ENCODE measurements at regions of chr6 and their contacts with region 1.

Region 1: DNA sequence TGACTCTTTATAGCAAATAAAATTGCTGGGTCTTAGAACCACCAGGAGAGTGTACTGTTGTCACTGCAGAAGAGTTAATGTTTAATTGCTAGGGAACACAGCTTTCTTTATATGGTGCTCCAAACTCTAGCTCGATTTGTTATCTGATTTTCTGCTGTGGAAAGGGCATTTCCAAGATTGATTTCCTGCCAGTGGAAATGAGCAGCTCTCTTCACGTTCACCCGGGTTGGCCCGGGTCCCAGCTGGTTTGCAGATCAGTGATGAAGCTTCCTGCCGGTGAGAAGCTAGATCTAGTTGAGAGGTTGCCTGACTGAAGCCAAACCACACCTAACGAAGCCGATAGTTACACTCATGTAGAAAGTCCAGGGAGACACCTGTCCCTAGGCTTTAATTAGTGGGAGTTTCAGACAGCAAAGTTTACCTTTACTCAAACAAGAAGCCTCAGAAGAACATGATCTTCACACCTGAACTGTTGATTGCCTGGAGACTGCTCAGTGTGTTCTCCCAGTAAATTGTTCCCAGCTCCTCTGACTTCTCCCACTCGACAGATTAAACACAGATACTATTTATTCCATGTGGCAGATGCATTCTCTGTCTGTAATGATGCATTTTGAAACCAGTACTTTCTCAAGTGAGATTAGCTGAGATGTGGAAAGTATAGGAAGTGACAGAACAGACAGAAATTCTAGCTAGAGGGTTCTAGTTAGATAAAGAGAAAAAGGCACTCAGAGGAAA is 27.8 kb downstream of the PAQR8 start:
- DNase-seq: peak; percentile 55
- H3K4me3 Mint-ChIP-seq: peak overlapping the region; percentile 59
- H3K27ac Mint-ChIP-seq: peak overlapping the region; percentile 84
- H3K4me1 Mint-ChIP-seq: peaks cover 78% of the 10 kb centered on the region
- H3K27me3 Mint-ChIP-seq: no peaks in the 10 kb centered on the region

Region 2: DNA sequence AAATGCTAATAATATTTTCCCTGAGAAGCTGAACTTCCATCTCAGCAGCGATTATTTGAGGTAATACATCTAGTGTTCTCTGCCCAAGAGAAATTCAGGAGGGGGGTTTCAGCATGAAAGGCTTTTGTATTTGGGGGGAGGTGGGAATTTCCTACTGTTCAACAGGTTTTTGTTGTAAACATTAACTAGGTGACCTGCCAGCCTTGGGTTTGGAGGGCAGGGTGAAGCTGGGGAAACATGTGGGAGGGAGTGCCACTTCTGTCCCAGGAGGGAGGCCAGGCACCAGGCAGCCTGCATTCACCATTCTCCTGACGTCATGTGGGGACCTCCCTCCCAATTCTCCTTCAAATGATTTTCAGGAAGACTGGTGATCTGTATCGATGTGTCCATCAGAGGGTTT is 264.7 kb before region 1 on chr6:
- intact Hi-C with region 1: no loop called
- DNase-seq: no peak
- H3K4me3 Mint-ChIP-seq: no peak overlapping the region
- H3K27ac Mint-ChIP-seq: no peak overlapping the region
- H3K4me1 Mint-ChIP-seq: no peaks in the 10 kb centered on the region
- H3K27me3 Mint-ChIP-seq: peaks cover 14% of the 10 kb centered on the region

Region 3: GRCh38 chr6:52227495-52227894 is 162.3 kb before region 1 on chr6:
- intact Hi-C with region 1: loop called (anchors 1 kb)
- DNase-seq: peak; percentile 71
- H3K4me3 Mint-ChIP-seq: no peak overlapping the region
- H3K27ac Mint-ChIP-seq: no peak overlapping the region
- H3K4me1 Mint-ChIP-seq: peaks cover 37% of the 10 kb centered on the region
- H3K27me3 Mint-ChIP-seq: peaks cover 60% of the 10 kb centered on the region

Region 4: DNA sequence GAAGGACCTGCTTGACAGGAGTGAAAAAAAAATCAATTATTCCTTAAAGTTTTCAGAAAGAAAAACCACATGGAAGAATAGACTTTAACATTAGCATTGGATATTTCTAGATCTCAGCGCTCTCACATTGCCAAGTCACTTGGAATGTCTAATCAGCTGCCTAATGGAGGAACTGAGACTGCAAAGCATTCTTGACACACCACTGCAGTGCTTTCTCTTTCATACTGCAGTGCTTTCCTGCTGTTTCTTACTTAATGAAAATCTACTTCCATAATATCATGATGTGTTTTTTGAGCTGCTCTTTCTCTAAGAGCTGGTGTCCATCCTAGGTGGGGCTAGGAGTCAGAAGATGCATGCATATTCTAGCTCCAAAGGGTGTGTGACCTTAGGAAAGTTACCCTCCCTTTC is 84.8 kb before region 1 on chr6:
- intact Hi-C with region 1: loop called (anchors 5 kb)
- DNase-seq: no peak
- H3K4me3 Mint-ChIP-seq: no peak overlapping the region
- H3K27ac Mint-ChIP-seq: peak overlapping the region; percentile 70
- H3K4me1 Mint-ChIP-seq: peaks cover 52% of the 10 kb centered on the region
- H3K27me3 Mint-ChIP-seq: no peaks in the 10 kb centered on the region

Region 5: GRCh38 chr6:52377538-52378221 is 12.1 kb before region 1 on chr6:
- intact Hi-C with region 1: loop called (anchors 1 kb)
- DNase-seq: no peak
- H3K4me3 Mint-ChIP-seq: no peak overlapping the region
- H3K27ac Mint-ChIP-seq: no peak overlapping the region
- H3K4me1 Mint-ChIP-seq: peaks cover 48% of the 10 kb centered on the region
- H3K27me3 Mint-ChIP-seq: no peaks in the 10 kb centered on the region

Region 6: GRCh38 chr6:52405243-52405642 is 15.4 kb after region 1 on chr6:
- intact Hi-C with region 1: no loop called
- DNase-seq: no peak
- H3K4me3 Mint-ChIP-seq: no peak overlapping the region
- H3K27ac Mint-ChIP-seq: no peak overlapping the region
- H3K4me1 Mint-ChIP-seq: peaks cover 7% of the 10 kb centered on the region
- H3K27me3 Mint-ChIP-seq: no peaks in the 10 kb centered on the region